ENCODE measurements at regions of chr1 and their contacts with region 1.

Region 1: GRCh38 chr1:228664399-228664914 is 70.8 kb upstream of the RHOU start:
- DNase-seq: peak; percentile 81 to 88
- ATAC-seq: peak; percentile 65
- H3K4me3 ChIP-seq: no peak overlapping the region
- H3K27ac ChIP-seq: no peak overlapping the region
- H3K4me1 ChIP-seq: peaks cover 0 to 2% of the 10 kb centered on the region in 2 donors
- H3K27me3 ChIP-seq: no peaks in the 10 kb centered on the region

Region 2: GRCh38 chr1:228814176-228814575 is 149.7 kb after region 1 on chr1:
- intact Hi-C with region 1: no loop called
- DNase-seq: no peak
- ATAC-seq: no peak
- H3K4me3 ChIP-seq: no peak overlapping the region
- H3K27ac ChIP-seq: no peak overlapping the region
- H3K4me1 ChIP-seq: no peaks in the 10 kb centered on the region
- H3K27me3 ChIP-seq: no peaks in the 10 kb centered on the region

Region 3: DNA sequence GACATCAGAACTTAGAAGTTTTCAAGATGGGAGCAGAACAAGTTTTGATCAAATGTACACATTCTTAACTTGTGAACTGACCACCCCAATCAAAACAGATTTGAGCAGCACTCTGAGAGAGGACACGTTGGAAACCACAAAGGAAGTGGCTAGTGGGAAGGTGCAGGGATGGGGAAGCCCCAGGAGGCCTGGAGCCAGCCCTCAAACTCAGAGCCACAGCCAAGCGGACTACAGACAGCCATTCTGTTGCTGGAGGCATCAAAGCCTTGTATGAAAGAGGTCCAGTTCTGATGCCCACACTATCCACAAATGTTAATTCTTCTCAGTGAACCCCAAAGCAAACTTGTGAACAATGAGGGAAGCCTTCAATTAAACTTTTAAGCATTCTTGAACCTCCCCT is 462.8 kb after region 1 on chr1:
- intact Hi-C with region 1: no loop called
- DNase-seq: no peak
- ATAC-seq: no peak
- H3K4me3 ChIP-seq: no peak overlapping the region
- H3K27ac ChIP-seq: no peak overlapping the region
- H3K4me1 ChIP-seq: no peaks in the 10 kb centered on the region
- H3K27me3 ChIP-seq: no peaks in the 10 kb centered on the region

Region 4: GRCh38 chr1:229156872-229157271 is 492.4 kb after region 1 on chr1:
- intact Hi-C with region 1: loop called (anchors 2 to 5 kb)
- DNase-seq: no peak
- ATAC-seq: peak; percentile 79
- H3K4me3 ChIP-seq: no peak overlapping the region
- H3K27ac ChIP-seq: no peak overlapping the region
- H3K4me1 ChIP-seq: no peaks in the 10 kb centered on the region
- H3K27me3 ChIP-seq: no peaks in the 10 kb centered on the region

Region 5: DNA sequence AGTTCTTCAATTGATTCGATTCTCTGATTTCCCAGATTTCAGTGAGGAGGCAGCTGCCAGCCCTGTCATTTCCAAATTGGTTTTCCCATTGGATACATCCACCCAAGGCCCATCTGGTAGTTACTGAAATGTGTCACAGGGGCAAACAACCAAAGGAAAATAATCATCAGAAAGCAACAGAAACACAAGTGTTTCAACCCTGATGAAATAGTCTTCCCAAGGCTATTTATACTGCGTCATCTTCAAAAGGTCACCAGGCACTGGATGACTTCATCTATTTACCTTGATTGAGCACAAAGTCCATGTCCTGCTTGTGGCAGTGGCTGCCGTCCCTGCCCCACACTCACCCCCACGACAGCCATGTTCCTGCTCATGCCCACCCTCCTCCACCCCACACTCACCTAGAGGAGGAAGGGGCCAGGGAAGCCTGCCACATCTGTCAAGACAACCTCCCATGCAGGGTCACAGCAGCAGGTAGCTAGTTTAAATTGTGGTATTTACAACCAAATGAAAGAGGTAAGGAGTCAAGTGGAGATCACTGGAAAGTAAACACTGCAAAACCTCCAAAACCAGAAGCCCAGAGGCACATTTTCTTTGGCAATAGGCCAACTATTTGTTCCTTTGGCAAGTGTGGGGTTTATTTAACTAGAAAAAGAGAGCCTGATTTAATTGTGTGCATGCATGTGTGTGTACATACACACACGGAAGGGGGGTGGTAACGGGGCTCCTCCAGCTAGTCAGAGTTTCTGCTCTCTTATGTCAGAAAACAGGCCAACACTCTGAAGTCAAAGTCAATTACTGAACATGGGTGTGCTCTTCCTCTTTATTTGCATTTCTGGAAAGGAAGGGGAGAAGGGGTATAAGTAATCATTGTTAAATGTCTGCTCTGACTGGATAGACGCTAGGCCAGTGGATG is 556.9 kb after region 1 on chr1:
- intact Hi-C with region 1: loop called (anchors 5 kb)
- DNase-seq: no peak
- ATAC-seq: peak; percentile 47
- H3K4me3 ChIP-seq: no peak overlapping the region
- H3K27ac ChIP-seq: no peak overlapping the region
- H3K4me1 ChIP-seq: peaks cover 0 to 9% of the 10 kb centered on the region in 2 donors
- H3K27me3 ChIP-seq: no peaks in the 10 kb centered on the region

Region 6: GRCh38 chr1:229227298-229227919 is 563.0 kb after region 1 on chr1:
- intact Hi-C with region 1: loop called (anchors 5 kb)
- DNase-seq: peak; percentile 84 to 94
- ATAC-seq: peak; percentile 72
- H3K4me3 ChIP-seq: no peak overlapping the region
- H3K27ac ChIP-seq: no peak overlapping the region
- H3K4me1 ChIP-seq: peaks cover 0 to 2% of the 10 kb centered on the region in 2 donors
- H3K27me3 ChIP-seq: no peaks in the 10 kb centered on the region

Region 7: GRCh38 chr1:229258031-229258756 is 593.7 kb after region 1 on chr1:
- intact Hi-C with region 1: loop called in 1 of 2 experiments (anchors 5 kb)
- DNase-seq: peak in 1 of 2 donors; percentile 61
- ATAC-seq: peak; percentile 88
- H3K4me3 ChIP-seq: no peak overlapping the region
- H3K27ac ChIP-seq: no peak overlapping the region
- H3K4me1 ChIP-seq: no peaks in the 10 kb centered on the region
- H3K27me3 ChIP-seq: no peaks in the 10 kb centered on the region